ENCODE measurements at regions of chr10 and their contacts with region 1.

Region 1: DNA sequence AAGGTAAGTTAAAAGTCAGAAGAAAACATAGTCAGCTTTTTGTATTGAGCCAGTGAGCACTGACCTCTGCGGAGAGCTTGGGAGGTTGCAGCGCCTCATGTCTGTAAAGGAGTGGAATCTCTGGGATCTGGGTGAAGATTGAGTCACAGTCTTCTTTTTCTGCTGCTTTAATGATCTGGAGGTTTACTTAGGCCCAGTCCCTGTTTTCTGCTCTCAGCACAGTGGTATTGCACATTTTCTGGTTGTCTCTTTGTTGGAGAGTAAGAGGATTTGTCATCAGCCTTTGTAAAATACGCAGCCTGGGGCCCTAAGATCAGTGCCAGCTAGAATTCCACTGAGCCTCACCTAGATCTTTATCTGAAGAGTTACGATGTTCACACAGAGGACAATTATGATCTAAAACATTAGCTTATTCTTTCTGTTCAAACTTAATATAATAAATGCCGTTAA is 58.3 kb upstream of the GJD4 start:
- DNase-seq: peak; percentile 87
- H3K4me3 Mint-ChIP-seq: peak overlapping the region; percentile 50
- H3K27ac Mint-ChIP-seq: peak overlapping the region; percentile 90
- H3K4me1 Mint-ChIP-seq: peaks cover 26% of the 10 kb centered on the region
- H3K27me3 Mint-ChIP-seq: no peaks in the 10 kb centered on the region
- CTCF ChIP-seq: peak; percentile 15

Region 2: GRCh38 chr10:35236739-35237138 is 310.1 kb before region 1 on chr10:
- CTCF ChIA-PET with region 1: interaction called, 4 read pairs
- POLR2A ChIA-PET with region 1: no interaction called
- intact Hi-C with region 1: loop called (anchors 5 kb)
- DNase-seq: peak; percentile 13
- H3K4me3 Mint-ChIP-seq: no peak overlapping the region
- H3K27ac Mint-ChIP-seq: no peak overlapping the region
- H3K4me1 Mint-ChIP-seq: no peaks in the 10 kb centered on the region
- H3K27me3 Mint-ChIP-seq: no peaks in the 10 kb centered on the region
- CTCF ChIP-seq: peak; percentile 19

Region 3: DNA sequence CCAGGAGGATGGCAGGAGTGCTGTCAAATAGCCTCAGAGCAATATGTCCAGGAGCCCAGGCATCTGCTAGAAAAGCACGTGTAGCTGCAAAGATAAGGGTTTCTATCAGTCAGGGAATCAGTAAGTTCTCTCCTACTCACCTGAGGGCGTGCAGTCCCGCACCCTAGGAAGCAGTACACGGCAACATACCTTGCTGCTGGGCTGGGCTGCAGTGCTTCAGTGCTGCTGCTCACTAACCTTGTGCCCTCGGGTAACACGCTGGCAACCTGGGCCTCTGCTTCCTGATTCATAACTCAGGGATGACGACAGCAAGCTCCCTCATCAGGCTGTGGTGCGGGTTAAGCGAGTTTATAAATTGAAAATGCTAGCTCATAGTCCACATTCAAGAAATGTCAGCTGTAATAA is 240.0 kb before region 1 on chr10:
- CTCF ChIA-PET with region 1: no interaction called
- POLR2A ChIA-PET with region 1: interaction called, 10 read pairs
- intact Hi-C with region 1: no loop called
- DNase-seq: peak; percentile 79
- H3K4me3 Mint-ChIP-seq: peak overlapping the region; percentile 66
- H3K27ac Mint-ChIP-seq: peak overlapping the region; percentile 94
- H3K4me1 Mint-ChIP-seq: peaks cover 18% of the 10 kb centered on the region
- H3K27me3 Mint-ChIP-seq: no peaks in the 10 kb centered on the region
- CTCF ChIP-seq: no peak

Region 4: DNA sequence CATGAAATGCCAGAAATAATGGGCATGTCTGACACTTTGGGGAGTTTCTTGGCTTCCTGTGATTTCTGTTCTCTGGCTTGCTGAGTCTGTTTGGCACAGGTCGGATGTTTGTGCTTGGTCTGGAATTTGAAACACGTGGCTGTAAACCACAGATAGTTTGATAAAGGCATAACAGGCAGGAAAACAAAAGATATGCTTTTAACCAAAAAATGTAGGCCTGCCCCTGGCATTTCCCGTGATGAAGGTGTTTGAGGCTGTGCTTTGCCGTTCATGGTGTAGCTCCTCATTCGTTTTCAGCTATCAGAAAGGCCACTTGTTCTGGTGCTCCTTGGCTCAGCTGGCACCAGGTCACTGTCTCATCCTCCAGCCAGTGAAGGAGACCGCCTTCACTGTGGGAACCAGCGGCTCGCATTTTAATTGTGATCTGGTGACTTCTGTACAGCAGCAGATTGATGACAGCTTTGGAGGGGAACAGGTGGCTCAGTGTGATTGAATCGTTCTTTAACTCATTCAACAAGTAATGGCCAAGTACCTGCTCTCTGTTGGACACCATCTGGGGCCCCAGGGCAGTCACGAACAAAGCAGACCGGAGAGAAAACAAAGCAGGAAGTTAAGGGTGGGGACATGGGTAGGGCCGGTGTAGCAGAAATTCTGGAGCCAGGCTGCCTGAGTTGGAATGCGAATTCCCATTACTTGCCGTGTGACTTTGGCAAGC is 99.0 kb before region 1 on chr10:
- CTCF ChIA-PET with region 1: interaction called, 5 read pairs
- POLR2A ChIA-PET with region 1: interaction called, 7 read pairs
- intact Hi-C with region 1: loop called (anchors 10 kb)
- DNase-seq: peak; percentile 78
- H3K4me3 Mint-ChIP-seq: peak overlapping the region; percentile 64
- H3K27ac Mint-ChIP-seq: peak overlapping the region; percentile 87
- H3K4me1 Mint-ChIP-seq: peaks cover 38% of the 10 kb centered on the region
- H3K27me3 Mint-ChIP-seq: no peaks in the 10 kb centered on the region
- CTCF ChIP-seq: no peak

Measured in MCF 10A (cell line).